ENCODE measurements at regions of chr22 and their contacts with region 1.

Region 1: DNA sequence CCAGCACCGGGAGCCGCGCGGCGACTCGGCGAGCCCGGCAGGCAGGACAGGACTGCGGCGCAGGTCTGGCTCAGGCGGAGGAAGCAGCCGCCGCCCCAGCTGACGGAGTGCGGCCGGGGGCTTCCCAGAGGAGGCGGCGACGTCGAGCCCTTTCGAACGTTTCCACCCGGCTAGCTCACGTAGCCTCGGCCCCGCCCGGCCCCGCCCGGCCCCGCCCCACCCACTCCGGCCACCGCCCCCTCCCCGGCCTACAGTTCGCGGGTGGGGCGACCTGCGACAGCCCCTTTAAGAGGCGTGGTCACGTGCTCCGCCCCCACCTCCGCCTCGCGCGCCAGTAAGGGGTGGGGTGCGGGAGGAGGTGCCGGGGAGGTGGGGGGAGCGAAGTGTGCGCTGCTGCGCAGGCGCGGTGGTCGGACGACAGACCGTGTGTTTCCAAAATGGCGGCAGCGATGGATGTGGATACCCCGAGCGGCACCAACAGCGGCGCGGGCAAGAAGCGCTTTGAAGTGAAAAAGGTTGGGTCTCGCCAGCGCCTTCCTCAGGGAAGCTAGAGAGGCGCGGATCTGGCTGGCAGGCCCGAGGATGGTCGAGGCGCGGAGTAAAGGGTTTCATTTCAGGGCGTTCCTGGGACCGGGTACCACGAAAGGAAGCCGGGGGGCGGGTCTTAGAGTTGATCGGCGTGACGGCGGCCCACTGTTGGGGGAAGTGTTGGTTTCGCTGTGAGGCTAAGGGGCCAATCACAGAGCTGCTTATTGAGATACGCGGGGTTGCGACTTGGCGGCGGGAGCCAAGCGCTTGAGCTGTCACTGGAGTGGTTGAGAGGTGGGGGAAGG is at the start of gene RBX1:
- DNase-seq: peak; percentile 100
- ATAC-seq: peak; percentile 82
- H3K4me3 ChIP-seq: peak within 1 kb of the TSS; percentile 88 to 95 (median 92)
- H3K4me3 Mint-ChIP-seq: peak within 1 kb of the TSS; percentile 100
- H3K27ac ChIP-seq: peak within 1 kb of the TSS; percentile 99 to 100
- H3K27ac Mint-ChIP-seq: peak within 1 kb of the TSS; percentile 100
- H3K4me1 ChIP-seq: peaks cover 18 to 21% of the 10 kb centered on the region in 2 donors
- H3K4me1 Mint-ChIP-seq: peaks cover 27% of the 10 kb centered on the region
- H3K27me3 ChIP-seq: no peaks in the 10 kb centered on the region
- H3K27me3 Mint-ChIP-seq: no peaks in the 10 kb centered on the region
- CTCF ChIP-seq: no peak
- total RNA-seq, gene RBX1: 49.8 and 50.7 TPM in 2 replicates

Region 2: GRCh38 chr22:40636380-40637182 is 314.6 kb before region 1 on chr22 and contains the start of gene MRTFA:
- CTCF ChIA-PET with region 1: no interaction called
- POLR2A ChIA-PET with region 1: no interaction called
- intact Hi-C with region 1: loop called (anchors 1 kb)
- DNase-seq: peak; percentile 99
- ATAC-seq: peak; percentile 90
- H3K4me3 ChIP-seq: peak within 1 kb of the TSS; percentile 81 to 99 (median 96)
- H3K4me3 Mint-ChIP-seq: peak within 1 kb of the TSS; percentile 98
- H3K27ac ChIP-seq: peak within 1 kb of the TSS; percentile 84 to 92
- H3K27ac Mint-ChIP-seq: peak within 1 kb of the TSS; percentile 97
- H3K4me1 ChIP-seq: peaks cover 24 to 30% of the 10 kb centered on the region in 2 donors
- H3K4me1 Mint-ChIP-seq: peaks cover 39% of the 10 kb centered on the region
- H3K27me3 ChIP-seq: no peaks in the 10 kb centered on the region
- H3K27me3 Mint-ChIP-seq: no peaks in the 10 kb centered on the region
- CTCF ChIP-seq: no peak
- total RNA-seq, gene MRTFA: 82.6 and 87.6 TPM in 2 replicates

Region 3: DNA sequence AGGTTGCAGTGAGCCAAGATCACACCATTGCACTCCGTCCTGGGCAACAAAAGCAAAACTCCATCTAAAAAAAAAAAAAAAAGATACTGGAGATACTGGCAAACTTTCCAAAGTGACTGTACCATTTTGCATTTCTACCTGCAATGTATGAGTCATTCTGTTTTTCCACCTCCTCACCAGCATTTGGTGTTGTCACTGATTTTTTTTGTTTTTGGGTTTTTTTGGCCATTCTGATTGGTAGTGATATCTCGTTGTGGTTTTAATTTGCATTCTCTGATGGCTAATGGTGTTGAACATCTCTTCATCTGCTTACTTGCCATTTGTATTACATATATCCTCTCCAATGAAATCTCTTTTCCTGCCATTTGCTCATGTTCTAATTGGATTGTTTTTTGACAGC is 12.0 kb before region 1 on chr22:
- CTCF ChIA-PET with region 1: interaction called, 4 read pairs
- POLR2A ChIA-PET with region 1: interaction called, 3 read pairs
- intact Hi-C with region 1: loop called (anchors 1 kb)
- DNase-seq: no peak
- ATAC-seq: no peak
- H3K4me3 ChIP-seq: no peak overlapping the region
- H3K4me3 Mint-ChIP-seq: no peak overlapping the region
- H3K27ac ChIP-seq: no peak overlapping the region
- H3K27ac Mint-ChIP-seq: no peak overlapping the region
- H3K4me1 ChIP-seq: peaks cover 25 to 26% of the 10 kb centered on the region in 2 donors
- H3K4me1 Mint-ChIP-seq: peaks cover 36% of the 10 kb centered on the region
- H3K27me3 ChIP-seq: no peaks in the 10 kb centered on the region
- H3K27me3 Mint-ChIP-seq: no peaks in the 10 kb centered on the region
- CTCF ChIP-seq: no peak

Region 4: DNA sequence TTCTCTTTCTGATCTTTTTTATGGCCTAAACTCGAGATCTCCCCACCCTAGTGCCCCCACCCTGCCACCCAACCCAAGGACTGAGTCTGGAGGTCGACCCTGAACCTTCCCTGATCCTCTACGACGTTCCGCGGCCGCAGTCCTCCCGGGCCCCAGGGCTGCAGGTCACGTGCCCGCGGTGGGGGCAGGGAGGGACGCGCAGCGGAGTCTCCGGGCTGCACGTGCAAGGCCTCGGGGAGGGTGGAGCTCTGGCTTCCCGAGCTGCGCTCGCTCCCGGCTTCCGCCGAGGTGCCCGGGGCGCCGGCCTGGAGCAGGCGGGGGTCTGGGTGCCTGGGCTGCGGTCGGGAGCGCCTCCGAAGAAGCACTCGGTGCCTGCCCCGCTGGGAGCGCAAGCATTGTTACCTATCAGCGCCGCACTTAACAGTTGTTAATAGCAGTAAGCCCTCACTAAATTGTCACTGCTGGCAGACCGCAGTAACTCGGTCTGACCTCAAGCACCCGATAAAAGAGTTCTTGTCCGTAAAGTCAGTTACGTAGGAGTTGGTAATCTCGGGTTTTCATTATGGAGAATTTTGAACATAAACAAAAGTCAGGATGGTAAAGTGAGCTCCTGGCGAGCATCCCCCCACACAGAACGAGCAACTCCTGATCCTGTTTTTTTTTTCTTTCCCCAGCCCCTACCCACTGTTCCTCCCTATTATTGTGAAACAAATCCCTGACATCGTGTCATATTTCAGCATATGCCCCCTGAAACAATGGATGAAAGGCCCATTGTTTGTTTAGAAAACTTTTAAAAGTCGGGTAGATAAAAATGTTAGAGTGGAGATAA is 71.5 kb after region 1 on chr22:
- CTCF ChIA-PET with region 1: interaction called, 7 read pairs
- POLR2A ChIA-PET with region 1: interaction called, 32 read pairs
- intact Hi-C with region 1: loop called (anchors 1 kb)
- DNase-seq: peak; percentile 87
- ATAC-seq: peak; percentile 71
- H3K4me3 ChIP-seq: peak overlapping the region; percentile 11 to 96 (median 70)
- H3K4me3 Mint-ChIP-seq: peak overlapping the region; percentile 88
- H3K27ac ChIP-seq: peak overlapping the region; percentile 83 to 86
- H3K27ac Mint-ChIP-seq: peak overlapping the region; percentile 94
- H3K4me1 ChIP-seq: peaks cover 8 to 14% of the 10 kb centered on the region in 2 donors
- H3K4me1 Mint-ChIP-seq: peaks cover 12% of the 10 kb centered on the region
- H3K27me3 ChIP-seq: no peaks in the 10 kb centered on the region
- H3K27me3 Mint-ChIP-seq: no peaks in the 10 kb centered on the region
- CTCF ChIP-seq: no peak

Region 5: GRCh38 chr22:41091132-41092022 is 140.2 kb after region 1 on chr22:
- CTCF ChIA-PET with region 1: interaction called, 3 read pairs
- POLR2A ChIA-PET with region 1: interaction called, 90 read pairs
- intact Hi-C with region 1: no loop called
- DNase-seq: peak; percentile 99
- ATAC-seq: peak; percentile 81
- H3K4me3 ChIP-seq: peak overlapping the region; percentile 74 to 100 (median 92)
- H3K4me3 Mint-ChIP-seq: peak overlapping the region; percentile 98
- H3K27ac ChIP-seq: peak overlapping the region; percentile 97 to 99
- H3K27ac Mint-ChIP-seq: peak overlapping the region; percentile 100
- H3K4me1 ChIP-seq: peaks cover 25% of the 10 kb centered on the region in 2 donors
- H3K4me1 Mint-ChIP-seq: peaks cover 32% of the 10 kb centered on the region
- H3K27me3 ChIP-seq: no peaks in the 10 kb centered on the region
- H3K27me3 Mint-ChIP-seq: no peaks in the 10 kb centered on the region
- CTCF ChIP-seq: no peak

Region 6: GRCh38 chr22:41117127-41117965 is 166.2 kb after region 1 on chr22:
- CTCF ChIA-PET with region 1: no interaction called
- POLR2A ChIA-PET with region 1: no interaction called
- intact Hi-C with region 1: no loop called
- DNase-seq: no peak
- ATAC-seq: no peak
- H3K4me3 ChIP-seq: no peak overlapping the region
- H3K4me3 Mint-ChIP-seq: no peak overlapping the region
- H3K27ac ChIP-seq: no peak overlapping the region
- H3K27ac Mint-ChIP-seq: peak overlapping the region; percentile 50
- H3K4me1 ChIP-seq: peaks cover 4 to 8% of the 10 kb centered on the region in 2 donors
- H3K4me1 Mint-ChIP-seq: peaks cover 34% of the 10 kb centered on the region
- H3K27me3 ChIP-seq: no peaks in the 10 kb centered on the region
- H3K27me3 Mint-ChIP-seq: no peaks in the 10 kb centered on the region
- CTCF ChIP-seq: no peak

Region 7: DNA sequence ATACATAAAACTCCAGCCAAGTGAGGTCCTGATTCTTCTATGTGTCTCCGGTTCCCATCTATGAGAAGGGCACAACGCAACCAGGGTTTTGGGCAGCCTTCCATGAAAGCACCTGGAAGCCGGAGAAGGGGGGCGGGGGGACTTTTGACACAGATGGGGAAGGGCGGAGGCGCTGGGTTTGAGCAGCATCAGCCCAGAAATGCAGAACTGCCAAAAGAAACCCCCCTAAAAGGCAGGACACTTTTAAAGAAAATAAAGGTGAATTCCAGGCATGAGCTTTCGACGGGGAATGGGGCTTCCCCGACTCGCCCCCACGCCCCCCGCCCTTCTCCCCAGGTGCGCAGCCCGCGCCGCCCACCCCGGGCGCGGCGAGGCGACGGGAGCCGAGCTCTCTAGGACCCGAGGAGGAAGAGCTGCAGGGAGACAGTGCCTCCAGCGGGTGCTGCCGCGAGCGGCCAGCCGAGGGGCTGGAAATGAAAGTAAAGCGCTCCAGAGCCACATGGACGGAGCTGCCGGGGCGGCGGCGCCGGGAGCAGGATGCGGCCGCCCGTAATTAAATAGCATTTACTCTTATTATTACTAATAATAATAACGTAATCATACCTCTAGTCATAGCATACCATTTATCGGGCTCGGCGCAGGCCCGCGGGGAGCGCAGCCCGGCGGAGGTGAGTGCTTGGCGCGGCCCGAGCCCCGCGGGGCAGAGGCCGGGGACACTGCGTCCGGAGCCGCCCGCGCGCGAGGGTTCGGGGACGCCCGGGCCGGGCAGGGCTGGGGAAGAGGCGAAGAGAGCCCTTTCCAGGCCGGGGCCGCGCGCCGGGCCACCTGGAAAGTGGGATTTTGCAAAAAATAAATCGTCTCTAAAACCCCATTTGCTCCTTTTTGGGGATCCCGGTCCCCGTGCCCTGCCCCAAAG is 350.2 kb after region 1 on chr22 and contains the start of gene ZC3H7B:
- CTCF ChIA-PET with region 1: no interaction called
- POLR2A ChIA-PET with region 1: no interaction called
- intact Hi-C with region 1: loop called (anchors 5 kb)
- DNase-seq: peak; percentile 94
- ATAC-seq: peak; percentile 92
- H3K4me3 ChIP-seq: peak within 1 kb of the TSS; percentile 59 to 95 (median 86)
- H3K4me3 Mint-ChIP-seq: peak within 1 kb of the TSS; percentile 86
- H3K27ac ChIP-seq: peak within 1 kb of the TSS; percentile 73 to 84
- H3K27ac Mint-ChIP-seq: peak within 1 kb of the TSS; percentile 75
- H3K4me1 ChIP-seq: peaks cover 13 to 17% of the 10 kb centered on the region in 2 donors
- H3K4me1 Mint-ChIP-seq: peaks cover 28% of the 10 kb centered on the region
- H3K27me3 ChIP-seq: no peaks in the 10 kb centered on the region
- H3K27me3 Mint-ChIP-seq: no peaks in the 10 kb centered on the region
- CTCF ChIP-seq: peak; percentile 51
- total RNA-seq, gene ZC3H7B: 41.9 and 42.2 TPM in 2 replicates